ENCODE measurements at regions of chrX and their contacts with region 1.

Region 1: DNA sequence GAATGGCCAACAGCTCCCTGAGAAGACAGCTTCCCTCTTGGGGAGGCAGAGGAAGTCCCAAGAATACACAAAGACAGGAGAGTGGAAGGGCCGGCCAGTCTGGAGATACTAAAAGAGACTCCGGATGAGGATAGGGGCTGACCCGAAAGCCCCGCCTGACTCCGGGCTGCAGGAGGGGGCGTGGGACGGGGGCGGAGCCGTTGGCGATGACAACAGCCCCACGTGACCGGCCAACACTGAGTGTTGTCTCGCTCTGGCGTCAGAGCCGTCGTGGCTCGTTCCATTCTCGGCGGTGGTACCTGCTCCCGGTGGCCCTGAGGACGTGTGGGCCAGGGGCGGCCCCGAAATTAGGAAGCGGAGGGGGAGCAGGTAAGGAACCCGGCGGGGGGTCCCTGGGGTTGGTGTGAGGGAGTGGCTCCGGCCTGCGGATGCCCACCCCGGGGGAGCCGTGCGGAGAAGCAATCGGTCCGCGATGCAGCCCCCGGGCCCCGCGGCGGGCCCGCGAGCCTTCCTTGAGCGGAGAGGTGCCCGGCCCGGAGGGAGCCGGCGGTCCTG is at the start of gene BEX4:
- DNase-seq: peak; percentile 83 to 91 (median 85)
- ATAC-seq: peak; percentile 97 to 99 (median 98)
- H3K4me3 ChIP-seq: peak within 1 kb of the TSS; percentile 58 to 96 (median 77)
- H3K27ac ChIP-seq: peak within 1 kb of the TSS; percentile 55 to 91 (median 84)
- H3K4me1 ChIP-seq: peaks cover 0 to 3% (median 0%) of the 10 kb centered on the region in 12 donors
- H3K27me3 ChIP-seq: peaks cover 0 to 11% (median 0%) of the 10 kb centered on the region in 9 donors
- CTCF ChIP-seq: no peak
- POLR2A ChIP-seq: peak; percentile 76 to 92
- total RNA-seq, gene BEX4: 34.8 to 54.5 (median 43.1) TPM

Region 2: DNA sequence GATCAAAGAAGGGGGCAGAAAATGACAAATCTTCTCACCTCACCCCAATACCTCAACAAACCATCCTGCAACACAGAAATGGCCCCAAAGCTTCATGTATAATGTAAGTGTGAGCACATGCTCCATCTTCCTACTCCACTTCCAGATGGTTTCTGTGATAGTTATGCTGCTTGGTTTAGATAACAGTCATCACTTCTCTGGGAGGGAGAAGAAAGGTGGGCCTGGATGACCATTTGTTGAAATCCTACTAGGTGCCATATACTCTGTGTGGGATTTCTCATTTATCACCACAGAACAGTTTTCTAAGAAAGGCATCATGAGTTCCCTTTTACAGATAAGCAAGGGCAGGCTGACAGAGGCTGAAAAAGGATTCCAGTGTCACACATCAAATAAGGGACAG is 90.7 kb before region 1 on chrX:
- intact Hi-C with region 1: no loop called
- DNase-seq: no peak
- ATAC-seq: no peak
- H3K4me3 ChIP-seq: no peak overlapping the region
- H3K27ac ChIP-seq: no peak overlapping the region
- H3K4me1 ChIP-seq: no peaks in the 10 kb centered on the region
- H3K27me3 ChIP-seq: no peaks in the 10 kb centered on the region
- CTCF ChIP-seq: no peak
- POLR2A ChIP-seq: no peak

Region 3: DNA sequence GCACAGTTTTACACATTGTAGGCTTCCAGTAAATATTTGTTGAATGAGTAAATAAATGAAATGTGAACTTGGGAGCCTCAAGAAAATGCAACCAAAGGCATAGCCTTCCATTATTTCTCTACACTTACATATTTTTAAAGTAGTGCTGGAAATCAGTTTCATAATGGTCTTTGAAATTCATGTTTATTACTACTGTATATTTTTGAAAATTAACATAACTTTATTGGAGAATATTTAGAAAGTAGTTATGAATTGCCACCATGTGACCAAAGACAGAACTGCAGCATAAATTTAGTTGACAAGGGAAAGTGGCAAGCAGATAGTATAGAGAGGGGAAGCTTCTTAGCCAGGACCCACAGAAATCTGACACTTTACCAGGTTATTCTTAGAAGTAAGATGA is 33.6 kb after region 1 on chrX:
- intact Hi-C with region 1: loop called in 8 of 10 experiments (anchors 2 to 5 kb)
- DNase-seq: no peak
- ATAC-seq: no peak
- H3K4me3 ChIP-seq: no peak overlapping the region
- H3K27ac ChIP-seq: no peak overlapping the region
- H3K4me1 ChIP-seq: peaks cover 0 to 13% (median 5%) of the 10 kb centered on the region in 12 donors
- H3K27me3 ChIP-seq: peaks cover 0 to 17% (median 0%) of the 10 kb centered on the region in 9 donors
- CTCF ChIP-seq: peak in 10 of 12 donors; percentile 20 to 50 (median 34)
- POLR2A ChIP-seq: no peak

Region 4: GRCh38 chrX:103254921-103255493 is 40.1 kb after region 1 on chrX and contains the start of gene TCEAL8:
- intact Hi-C with region 1: loop called in 8 of 10 experiments (anchors 1 to 5 kb)
- DNase-seq: peak; percentile 79 to 90 (median 84)
- ATAC-seq: peak; percentile 96 to 99 (median 97)
- H3K4me3 ChIP-seq: peak within 1 kb of the TSS; percentile 31 to 95 (median 68)
- H3K27ac ChIP-seq: peak within 1 kb of the TSS; percentile 80 to 91 (median 88)
- H3K4me1 ChIP-seq: peaks cover 0 to 15% (median 5%) of the 10 kb centered on the region in 12 donors
- H3K27me3 ChIP-seq: peaks cover 0 to 8% (median 0%) of the 10 kb centered on the region in 9 donors
- CTCF ChIP-seq: no peak
- POLR2A ChIP-seq: peak in 1 of 2 donors; percentile 42
- total RNA-seq, gene TCEAL8: 38.2 to 60.1 (median 52.7) TPM

Region 5: DNA sequence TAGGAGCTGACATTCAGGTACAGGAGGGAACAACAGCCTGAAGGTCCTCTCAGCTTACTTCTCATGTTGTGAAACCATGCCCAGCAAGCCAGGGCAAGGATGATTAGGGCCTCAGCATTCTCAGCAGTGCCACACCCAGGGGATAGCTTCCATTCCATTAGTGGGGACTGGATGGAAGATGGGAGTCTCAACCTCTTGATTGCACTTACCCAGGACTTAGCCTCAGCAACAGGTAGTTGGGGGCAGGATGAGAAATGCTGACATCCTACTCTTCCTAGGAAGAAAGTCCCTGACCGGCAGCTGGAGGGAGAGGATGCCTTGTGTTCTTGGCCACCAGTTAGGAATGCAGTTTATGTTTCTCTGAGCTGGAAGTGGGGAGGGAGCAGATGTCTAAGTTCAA is 152.6 kb after region 1 on chrX:
- intact Hi-C with region 1: no loop called
- DNase-seq: no peak
- ATAC-seq: no peak
- H3K4me3 ChIP-seq: no peak overlapping the region
- H3K27ac ChIP-seq: no peak overlapping the region
- H3K4me1 ChIP-seq: no peaks in the 10 kb centered on the region
- H3K27me3 ChIP-seq: peaks cover 0 to 5% (median 0%) of the 10 kb centered on the region in 9 donors
- CTCF ChIP-seq: no peak
- POLR2A ChIP-seq: no peak

Region 6: DNA sequence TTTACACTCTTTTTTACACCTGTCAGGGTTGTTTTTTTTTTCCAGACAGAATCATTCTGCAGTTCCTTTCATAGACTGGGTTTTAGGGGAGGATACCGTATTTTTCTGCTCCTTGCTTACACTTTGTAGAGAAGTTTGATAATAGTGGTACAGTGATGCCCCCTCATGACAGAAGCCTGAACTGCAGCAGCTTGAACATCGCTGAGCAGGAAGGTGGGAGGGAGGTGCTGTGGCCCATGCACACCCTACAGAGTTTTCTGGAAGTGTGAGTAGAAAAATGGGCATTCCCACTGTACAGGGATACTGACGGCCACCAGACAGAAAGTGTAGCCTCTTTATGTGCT is 249.8 kb after region 1 on chrX:
- intact Hi-C with region 1: loop called in 9 of 10 experiments (anchors 1 to 10 kb)
- DNase-seq: peak in 3 of 5 donors; percentile 41 to 59 (median 52)
- ATAC-seq: peak in 3 of 4 donors; percentile 90 to 96 (median 91)
- H3K4me3 ChIP-seq: peak overlapping the region in 10 of 12 donors; percentile 15 to 55 (median 36)
- H3K27ac ChIP-seq: no peak overlapping the region
- H3K4me1 ChIP-seq: no peaks in the 10 kb centered on the region
- H3K27me3 ChIP-seq: peaks cover 0 to 10% (median 0%) of the 10 kb centered on the region in 9 donors
- CTCF ChIP-seq: peak; percentile 49 to 78 (median 68)
- POLR2A ChIP-seq: no peak

Measured in heart left ventricle (tissue), 16 donors.